Activated CD4-positive, alpha-beta T cell treated with anti-CD3 and anti-CD28 coated beads, Interleukin-2, amount 10 ng/mL, durations not matched to agents 24 days and 14 days (primary cell): ENCODE measurements at regions of chr9 and their contacts with region 1.

Region 1: DNA sequence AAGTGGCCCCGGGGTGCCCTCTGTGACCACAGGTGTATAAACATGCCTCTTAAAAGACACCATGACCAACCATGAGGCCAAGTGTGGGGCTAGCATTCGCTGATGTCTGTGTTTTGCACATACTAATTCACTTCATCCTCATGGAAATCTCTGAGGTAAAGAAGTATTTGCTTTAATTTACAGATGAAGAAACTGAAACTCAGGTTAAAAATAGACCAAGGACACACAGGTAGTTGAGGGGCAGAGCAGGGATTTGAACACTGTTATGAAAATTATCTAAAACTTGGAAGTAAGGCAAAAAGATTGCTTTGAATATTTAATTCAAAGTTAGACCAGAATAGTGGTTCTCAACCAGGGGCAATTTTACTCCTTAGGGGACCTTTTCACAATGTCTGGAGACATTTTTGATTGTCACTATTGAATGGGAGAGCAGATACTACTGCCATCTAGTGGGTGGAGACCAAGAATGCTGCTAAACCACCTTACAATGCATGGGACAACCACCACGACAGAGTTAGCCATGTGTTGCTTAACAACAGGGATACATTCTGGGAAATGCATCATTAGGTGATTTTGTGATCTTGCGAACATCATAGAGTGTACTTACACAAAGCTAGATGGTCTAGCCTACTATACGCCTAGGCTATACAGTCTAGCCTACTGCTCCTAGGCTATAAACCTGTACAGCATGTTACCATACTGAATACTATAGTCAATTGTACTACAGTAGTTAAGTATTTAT is 8.0 kb upstream of the FXN start:
- DNase-seq: peak; percentile 84
- H3K4me3 Mint-ChIP-seq: no peak overlapping the region
- H3K27ac Mint-ChIP-seq: no peak overlapping the region
- H3K4me1 Mint-ChIP-seq: peaks cover 44% of the 10 kb centered on the region
- H3K27me3 Mint-ChIP-seq: peaks cover 2% of the 10 kb centered on the region

Region 2: GRCh38 chr9:68955330-68955729 is 72.2 kb before region 1 on chr9:
- intact Hi-C with region 1: loop called (anchors 2 kb)
- DNase-seq: no peak
- H3K4me3 Mint-ChIP-seq: peak overlapping the region; percentile 34
- H3K27ac Mint-ChIP-seq: peak overlapping the region; percentile 81
- H3K4me1 Mint-ChIP-seq: peaks cover 32% of the 10 kb centered on the region
- H3K27me3 Mint-ChIP-seq: peaks cover 9% of the 10 kb centered on the region